ENCODE measurements at regions of chr3 and their contacts with region 1.

Region 1: GRCh38 chr3:69120879-69121464 is 1.4 kb downstream of the LMOD3 start:
- DNase-seq: peak; percentile 73 to 92
- ATAC-seq: peak; percentile 43 to 49
- H3K4me3 ChIP-seq: peak overlapping the region; percentile 25 to 54 (median 48)
- H3K27ac ChIP-seq: peak overlapping the region; percentile 95 to 97 (median 96)
- H3K4me1 ChIP-seq: peaks cover 13 to 52% of the 10 kb centered on the region in 2 donors
- H3K27me3 ChIP-seq: no peaks in the 10 kb centered on the region
- CTCF ChIP-seq: peak; percentile 91 to 93 (median 92)
- POLR2A ChIP-seq: no peak

Region 2: GRCh38 chr3:69085833-69086722 is 34.9 kb before region 1 on chr3:
- in situ Hi-C with region 1: no loop called
- intact Hi-C with region 1: loop called (anchors 2 kb)
- DNase-seq: peak; percentile 89 to 96
- ATAC-seq: peak; percentile 53 to 57
- H3K4me3 ChIP-seq: peak overlapping the region; percentile 85 to 97 (median 88)
- H3K27ac ChIP-seq: peak overlapping the region; percentile 95 to 99 (median 97)
- H3K4me1 ChIP-seq: peaks cover 77 to 80% of the 10 kb centered on the region in 2 donors
- H3K27me3 ChIP-seq: no peaks in the 10 kb centered on the region
- CTCF ChIP-seq: no peak
- POLR2A ChIP-seq: peak; percentile 51 to 61

Region 3: GRCh38 chr3:69149586-69149985 is 28.6 kb after region 1 on chr3:
- in situ Hi-C with region 1: no loop called
- intact Hi-C with region 1: loop called (anchors 1 kb)
- DNase-seq: peak; percentile 42 to 46
- ATAC-seq: peak; percentile 98 to 99
- H3K4me3 ChIP-seq: no peak overlapping the region
- H3K27ac ChIP-seq: peak overlapping the region; percentile 60 to 77 (median 66)
- H3K4me1 ChIP-seq: peaks cover 18 to 20% of the 10 kb centered on the region in 2 donors
- H3K27me3 ChIP-seq: no peaks in the 10 kb centered on the region
- CTCF ChIP-seq: no peak
- POLR2A ChIP-seq: no peak

Region 4: GRCh38 chr3:69739204-69740102 is 618.5 kb after region 1 on chr3 and contains the start of gene MITF:
- in situ Hi-C with region 1: no loop called
- intact Hi-C with region 1: loop called (anchors 2 kb)
- DNase-seq: peak; percentile 95 to 96
- ATAC-seq: peak; percentile 75 to 78
- H3K4me3 ChIP-seq: peak within 1 kb of the TSS; percentile 76 to 98 (median 88)
- H3K27ac ChIP-seq: peak within 1 kb of the TSS; percentile 91 to 97 (median 92)
- H3K4me1 ChIP-seq: peaks cover 60 to 64% of the 10 kb centered on the region in 2 donors
- H3K27me3 ChIP-seq: no peaks in the 10 kb centered on the region
- CTCF ChIP-seq: peak in 1 of 5 experiments; percentile 8
- POLR2A ChIP-seq: peak; percentile 99
- total RNA-seq, gene MITF: 71.1 to 139 (median 109) TPM

Region 5: GRCh38 chr3:69869643-69870042 is 748.7 kb after region 1 on chr3:
- in situ Hi-C with region 1: no loop called
- intact Hi-C with region 1: loop called (anchors 10 kb)
- DNase-seq: no peak
- ATAC-seq: no peak
- H3K4me3 ChIP-seq: no peak overlapping the region
- H3K27ac ChIP-seq: peak overlapping the region in 3 of 4 donors; percentile 15 to 38 (median 31)
- H3K4me1 ChIP-seq: peaks cover 62 to 63% of the 10 kb centered on the region in 2 donors
- H3K27me3 ChIP-seq: no peaks in the 10 kb centered on the region
- CTCF ChIP-seq: no peak
- POLR2A ChIP-seq: no peak